ENCODE measurements at regions of chr7 and their contacts with region 1.

Region 1: GRCh38 chr7:87152107-87152844 is at the start of gene DMTF1:
- DNase-seq: peak; percentile 92 to 99 (median 95)

Region 2: GRCh38 chr7:86926732-86927131 is 225.5 kb before region 1 on chr7:
- intact Hi-C with region 1: loop called (anchors 5 kb)
- DNase-seq: peak in 2 of 10 donors; percentile 21 to 37

Region 3: DNA sequence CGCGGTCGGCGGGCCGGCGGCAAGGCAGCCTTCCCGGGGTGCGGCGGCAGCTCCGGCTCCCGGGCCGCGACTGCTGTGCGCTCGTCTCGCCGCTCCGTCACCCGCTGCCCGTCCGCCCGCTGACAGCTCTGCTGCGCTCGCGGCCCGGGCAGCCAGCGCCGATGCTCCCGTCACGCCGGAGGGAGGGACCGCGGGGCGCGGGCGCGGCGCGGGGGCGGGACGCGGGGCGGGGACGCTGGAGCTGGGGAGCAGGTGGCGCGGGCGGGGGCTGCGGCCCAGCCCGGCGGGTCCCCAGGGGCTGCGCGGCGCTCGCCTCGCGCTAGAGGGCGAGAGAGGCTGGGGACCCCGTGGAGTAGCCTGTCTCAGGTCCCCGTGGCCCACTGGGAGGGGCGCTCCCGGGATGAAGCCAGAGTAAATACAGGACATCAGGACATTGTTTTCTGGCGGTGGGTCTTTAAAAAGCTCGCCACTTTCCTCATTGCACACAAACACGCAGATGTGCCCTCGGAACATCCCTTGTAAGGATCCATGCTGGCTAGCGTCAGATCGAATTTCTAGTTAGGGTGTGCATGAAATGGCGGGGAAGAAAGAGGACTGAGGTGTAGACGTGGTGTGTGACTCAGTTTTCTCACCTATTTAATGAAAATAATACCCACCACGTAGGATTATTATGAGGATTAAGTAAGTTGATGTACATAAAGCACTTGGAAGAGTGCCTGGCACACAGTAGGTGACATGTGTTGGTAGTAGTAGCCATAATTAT is 92.6 kb before region 1 on chr7 and contains the start of gene ELAPOR2:
- intact Hi-C with region 1: loop called (anchors 1 kb)
- DNase-seq: peak; percentile 74 to 98 (median 82)

Region 4: GRCh38 chr7:87219545-87220025 is 67.3 kb after region 1 on chr7 and contains the start of gene TMEM243:
- intact Hi-C with region 1: loop called (anchors 5 kb)
- DNase-seq: peak; percentile 32 to 93 (median 60)

Region 5: DNA sequence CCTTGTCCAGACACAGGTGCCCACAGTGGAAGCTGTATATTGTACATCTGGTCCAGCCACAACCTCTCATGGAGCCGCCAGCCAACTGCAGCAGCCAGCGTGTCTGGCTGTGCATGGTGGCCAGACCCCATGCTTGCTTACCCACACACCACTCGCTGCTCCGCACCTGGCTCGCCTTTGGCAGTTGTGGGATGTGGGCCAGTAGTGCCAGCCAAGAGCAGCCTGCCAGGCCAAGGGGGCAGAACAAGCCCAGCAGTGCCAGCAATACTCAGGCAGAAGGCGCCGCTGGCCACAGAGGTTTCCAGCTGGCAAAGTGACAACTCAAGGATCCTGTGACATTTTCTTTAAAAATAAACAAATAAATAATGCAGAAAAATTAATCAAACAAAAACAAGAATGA is 79.0 kb after region 1 on chr7:
- intact Hi-C with region 1: loop called (anchors 2 kb)
- DNase-seq: peak; percentile 21 to 89 (median 45)

Region 6: GRCh38 chr7:87345166-87345927 is 193.1 kb after region 1 on chr7 and contains the start of gene CROT:
- intact Hi-C with region 1: loop called (anchors 10 kb)
- DNase-seq: peak; percentile 95 to 100 (median 98)

Measured in posterior cingulate gyrus (tissue), 11 donors.